ENCODE measurements at regions of chr1 and their contacts with region 1.

Region 1: GRCh38 chr1:62271948-62272728 is 47.1 kb downstream of the KANK4 start:
- DNase-seq: peak; percentile 47 to 69 (median 62)
- H3K4me3 ChIP-seq: peak overlapping the region; percentile 2 to 6
- H3K4me3 Mint-ChIP-seq: peak overlapping the region in 7 of 8 donors; percentile 44 to 73 (median 63)
- H3K27ac ChIP-seq: peak overlapping the region; percentile 6
- H3K27ac Mint-ChIP-seq: peak overlapping the region; percentile 17 to 95 (median 90)
- H3K4me1 ChIP-seq: peaks cover 20% of the 10 kb centered on the region
- H3K4me1 Mint-ChIP-seq: peaks cover 16 to 36% (median 23%) of the 10 kb centered on the region in 4 donors
- H3K27me3 ChIP-seq: no peaks in the 10 kb centered on the region
- H3K27me3 Mint-ChIP-seq: peaks cover 0 to 3% of the 10 kb centered on the region in 2 donors

Region 2: DNA sequence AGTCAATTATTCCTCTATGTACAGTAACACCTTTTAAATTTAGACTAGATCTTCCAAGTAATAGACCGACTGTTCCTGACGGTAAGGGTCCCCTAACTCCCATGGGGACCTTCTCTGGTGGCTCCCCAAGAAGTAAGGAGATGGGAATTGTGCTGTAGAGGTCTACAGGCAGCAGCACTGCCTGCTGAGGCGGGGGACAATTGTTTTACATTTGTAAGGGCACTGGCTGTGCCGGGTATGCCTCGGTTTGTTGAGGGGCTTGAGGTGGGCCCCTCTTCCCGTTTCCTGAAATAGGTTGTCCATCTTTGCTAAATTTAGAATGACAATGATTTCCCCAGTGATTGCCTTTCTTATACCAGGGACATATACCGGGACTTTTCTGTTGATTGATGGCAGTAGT is 90.6 kb before region 1 on chr1:
- CTCF ChIA-PET with region 1: no interaction called
- POLR2A ChIA-PET with region 1: no interaction called
- intact Hi-C with region 1: no loop called
- DNase-seq: no peak
- H3K4me3 ChIP-seq: no peak overlapping the region
- H3K4me3 Mint-ChIP-seq: no peak overlapping the region
- H3K27ac ChIP-seq: no peak overlapping the region
- H3K27ac Mint-ChIP-seq: peak overlapping the region in 1 of 7 donors; percentile 18
- H3K4me1 ChIP-seq: no peaks in the 10 kb centered on the region
- H3K4me1 Mint-ChIP-seq: no peaks in the 10 kb centered on the region
- H3K27me3 ChIP-seq: no peaks in the 10 kb centered on the region
- H3K27me3 Mint-ChIP-seq: peaks cover 3 to 7% of the 10 kb centered on the region in 2 donors

Region 3: GRCh38 chr1:62295921-62296491 is 23.9 kb after region 1 on chr1:
- CTCF ChIA-PET with region 1: interaction called, 3 read pairs
- POLR2A ChIA-PET with region 1: no interaction called
- intact Hi-C with region 1: loop called (anchors 2 kb)
- DNase-seq: peak in 4 of 5 donors; percentile 2 to 31 (median 26)
- H3K4me3 ChIP-seq: no peak overlapping the region
- H3K4me3 Mint-ChIP-seq: peak overlapping the region in 4 of 8 donors; percentile 1 to 70 (median 44)
- H3K27ac ChIP-seq: no peak overlapping the region
- H3K27ac Mint-ChIP-seq: no peak overlapping the region
- H3K4me1 ChIP-seq: peaks cover 11% of the 10 kb centered on the region
- H3K4me1 Mint-ChIP-seq: peaks cover 7 to 12% (median 10%) of the 10 kb centered on the region in 4 donors
- H3K27me3 ChIP-seq: no peaks in the 10 kb centered on the region
- H3K27me3 Mint-ChIP-seq: peaks cover 0 to 18% of the 10 kb centered on the region in 2 donors

Measured in CD4-positive, alpha-beta memory T cell (primary cell).